ENCODE measurements at regions of chr20 and their contacts with region 1.

Region 1: GRCh38 chr20:22716821-22717351 is 132.5 kb upstream of the FOXA2 start:
- DNase-seq: no peak
- ATAC-seq: no peak
- H3K4me3 ChIP-seq: no peak overlapping the region
- H3K27ac ChIP-seq: peak overlapping the region in 8 of 10 donors; percentile 6 to 75 (median 58)
- H3K4me1 ChIP-seq: peaks cover 5 to 48% (median 37%) of the 10 kb centered on the region in 9 donors
- H3K27me3 ChIP-seq: no peaks in the 10 kb centered on the region
- CTCF ChIP-seq: no peak

Region 2: GRCh38 chr20:22700367-22700766 is 16.5 kb before region 1 on chr20:
- intact Hi-C with region 1: no loop called
- DNase-seq: no peak
- ATAC-seq: no peak
- H3K4me3 ChIP-seq: no peak overlapping the region
- H3K27ac ChIP-seq: no peak overlapping the region
- H3K4me1 ChIP-seq: peaks cover 0 to 24% (median 3%) of the 10 kb centered on the region in 9 donors
- H3K27me3 ChIP-seq: no peaks in the 10 kb centered on the region
- CTCF ChIP-seq: no peak

Region 3: GRCh38 chr20:22974353-22974752 is 257.5 kb after region 1 on chr20:
- intact Hi-C with region 1: loop called in 1 of 10 experiments (anchors 5 kb)
- DNase-seq: no peak
- ATAC-seq: no peak
- H3K4me3 ChIP-seq: no peak overlapping the region
- H3K27ac ChIP-seq: no peak overlapping the region
- H3K4me1 ChIP-seq: peaks cover 3 to 25% (median 16%) of the 10 kb centered on the region in 9 donors
- H3K27me3 ChIP-seq: peaks cover 0 to 22% (median 4%) of the 10 kb centered on the region in 7 donors
- CTCF ChIP-seq: peak in 5 of 9 donors; percentile 18 to 52 (median 18)

Region 4: GRCh38 chr20:23235173-23236027 is 518.5 kb after region 1 on chr20:
- intact Hi-C with region 1: no loop called
- DNase-seq: peak; percentile 73 to 77
- ATAC-seq: peak; percentile 88 to 95 (median 92)
- H3K4me3 ChIP-seq: no peak overlapping the region
- H3K27ac ChIP-seq: no peak overlapping the region
- H3K4me1 ChIP-seq: peaks cover 0 to 11% (median 0%) of the 10 kb centered on the region in 9 donors
- H3K27me3 ChIP-seq: no peaks in the 10 kb centered on the region
- CTCF ChIP-seq: peak; percentile 81 to 92 (median 89)

Measured in heart right ventricle (tissue), 16 donors.